Activated CD4-positive, alpha-beta T cell treated with anti-CD3 and anti-CD28 coated beads for 36 hours (primary cell): ENCODE measurements at regions of chr1 and their contacts with region 1.

Region 1: DNA sequence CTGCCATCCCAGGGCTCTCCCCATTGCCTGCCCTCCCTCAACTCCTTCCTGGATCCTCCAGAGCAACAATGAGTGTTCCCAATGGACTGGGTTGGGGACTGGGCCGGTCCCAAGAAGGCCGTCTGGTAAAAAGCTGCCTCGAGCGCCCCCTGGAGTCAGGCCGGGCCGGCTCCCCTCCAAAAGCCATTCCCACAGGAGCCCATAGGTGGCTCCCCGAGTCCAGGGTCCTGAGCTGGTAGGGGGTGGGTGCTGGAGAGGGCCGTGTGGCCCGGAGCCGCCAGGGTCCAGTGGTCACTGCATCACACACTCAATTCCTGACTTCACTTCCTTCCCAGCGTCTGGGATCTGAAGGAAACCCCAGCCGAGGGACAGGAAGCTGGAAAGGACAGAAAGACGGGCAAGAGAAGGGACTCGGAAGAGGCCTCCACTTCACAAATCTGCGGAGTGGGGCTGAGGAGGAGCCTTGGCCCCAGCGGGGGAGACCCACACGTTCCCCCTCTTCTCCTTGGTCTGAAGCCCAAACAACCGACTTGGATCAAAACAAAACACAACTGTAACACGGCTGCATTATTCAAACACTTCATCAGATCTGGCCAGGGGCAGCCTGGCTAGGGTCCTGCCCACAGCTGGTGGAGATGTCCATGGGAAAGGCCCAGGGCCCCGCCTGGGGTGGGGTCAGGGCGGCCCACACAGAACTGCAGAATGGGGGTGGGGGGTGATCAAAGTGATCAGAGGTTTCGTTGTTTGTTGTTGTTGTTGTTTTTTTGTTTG is 10.9 kb upstream of the ALDH4A1 start:
- DNase-seq: peak; percentile 87
- ATAC-seq: peak; percentile 86
- H3K4me3 Mint-ChIP-seq: no peak overlapping the region
- H3K27ac Mint-ChIP-seq: peak overlapping the region; percentile 70
- H3K4me1 Mint-ChIP-seq: peaks cover 28% of the 10 kb centered on the region
- H3K27me3 Mint-ChIP-seq: no peaks in the 10 kb centered on the region

Region 2: DNA sequence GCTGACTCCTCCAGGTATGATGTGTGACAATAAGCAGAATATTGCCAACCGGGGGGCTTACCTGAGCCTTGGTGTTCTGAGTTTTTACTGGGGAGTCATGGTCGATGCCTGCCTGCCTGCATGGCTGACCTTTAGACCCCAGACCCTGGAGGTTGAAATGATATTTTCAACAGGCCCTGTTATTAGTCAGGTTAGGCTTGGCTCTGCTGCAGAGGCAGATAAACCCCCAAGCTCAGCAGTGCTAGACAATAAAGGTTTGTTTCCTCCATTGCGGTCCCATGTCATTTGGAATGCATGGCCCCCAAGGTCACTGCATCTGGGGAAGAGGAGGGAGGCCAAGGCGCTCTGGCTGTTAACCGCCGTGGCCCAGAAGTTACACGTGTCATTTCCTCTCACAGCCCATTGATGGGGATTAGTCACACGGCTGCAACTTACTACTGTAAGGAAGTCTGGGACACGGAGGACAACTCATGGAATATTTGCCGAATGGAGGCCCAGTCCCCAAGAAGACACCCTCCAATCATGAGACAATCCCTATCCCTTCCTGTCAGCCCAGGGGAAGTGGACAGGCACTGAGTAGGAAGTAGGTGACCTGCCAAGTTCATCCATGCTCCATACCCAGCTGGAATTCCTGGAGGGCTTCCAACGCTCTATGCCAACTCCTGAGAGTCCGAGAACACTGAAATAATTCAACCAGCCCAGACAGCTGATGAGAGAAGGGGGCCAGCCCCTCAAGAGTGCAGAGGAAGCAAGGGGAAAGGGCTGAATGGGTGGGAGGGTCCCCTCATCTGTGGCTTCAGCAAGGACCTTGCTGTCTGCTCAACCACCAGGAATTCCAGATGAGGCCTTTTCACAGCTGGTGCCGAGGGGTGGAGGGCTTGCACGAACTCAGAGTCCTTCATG is 151.1 kb before region 1 on chr1:
- CTCF ChIA-PET with region 1: no interaction called
- POLR2A ChIA-PET with region 1: no interaction called
- intact Hi-C with region 1: no loop called
- DNase-seq: no peak
- ATAC-seq: no peak
- H3K4me3 Mint-ChIP-seq: no peak overlapping the region
- H3K27ac Mint-ChIP-seq: no peak overlapping the region
- H3K4me1 Mint-ChIP-seq: no peaks in the 10 kb centered on the region
- H3K27me3 Mint-ChIP-seq: peaks cover 21% of the 10 kb centered on the region

Region 3: GRCh38 chr1:18949686-18950400 is 36.6 kb after region 1 on chr1:
- CTCF ChIA-PET with region 1: interaction called, 28 read pairs
- POLR2A ChIA-PET with region 1: interaction called, 4 read pairs
- intact Hi-C with region 1: no loop called
- DNase-seq: peak; percentile 64
- ATAC-seq: no peak
- H3K4me3 Mint-ChIP-seq: peak overlapping the region; percentile 86
- H3K27ac Mint-ChIP-seq: peak overlapping the region; percentile 92
- H3K4me1 Mint-ChIP-seq: peaks cover 93% of the 10 kb centered on the region
- H3K27me3 Mint-ChIP-seq: no peaks in the 10 kb centered on the region

Region 4: GRCh38 chr1:18972531-18972930 is 59.3 kb after region 1 on chr1:
- CTCF ChIA-PET with region 1: interaction called, 11 read pairs
- POLR2A ChIA-PET with region 1: no interaction called
- intact Hi-C with region 1: no loop called
- DNase-seq: no peak
- ATAC-seq: peak; percentile 42
- H3K4me3 Mint-ChIP-seq: no peak overlapping the region
- H3K27ac Mint-ChIP-seq: no peak overlapping the region
- H3K4me1 Mint-ChIP-seq: peaks cover 8% of the 10 kb centered on the region
- H3K27me3 Mint-ChIP-seq: peaks cover 2% of the 10 kb centered on the region

Region 5: DNA sequence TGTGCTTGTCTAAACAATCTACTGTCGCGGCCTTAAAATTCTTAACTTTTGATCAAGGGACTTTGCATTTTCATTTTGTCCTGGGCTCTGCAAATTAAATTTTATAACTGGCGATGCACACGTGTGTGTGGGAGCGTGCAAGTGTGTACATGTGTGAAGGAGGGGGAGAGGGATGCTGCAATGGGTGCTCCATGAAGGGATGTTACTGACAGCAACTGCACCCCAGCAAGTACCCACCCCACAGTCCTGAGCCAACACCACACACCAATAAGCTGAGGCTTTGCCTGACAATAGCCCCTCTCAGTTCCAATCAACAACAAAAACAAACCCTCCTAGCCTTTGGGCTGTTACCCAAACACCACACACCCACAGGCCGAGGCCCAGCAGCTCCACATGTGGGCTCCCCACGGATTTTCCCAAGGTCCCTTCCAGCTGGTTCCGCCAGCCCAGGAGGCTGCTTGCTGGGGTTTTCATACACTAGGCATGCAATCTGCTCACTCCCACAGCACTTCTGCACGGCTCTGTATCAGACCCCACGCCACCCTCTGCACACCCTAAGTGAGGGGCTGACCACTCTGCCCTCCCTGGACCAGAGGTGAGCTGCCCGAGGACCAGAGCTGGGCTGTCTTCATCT is 76.0 kb after region 1 on chr1:
- CTCF ChIA-PET with region 1: interaction called, 10 read pairs
- POLR2A ChIA-PET with region 1: no interaction called
- intact Hi-C with region 1: no loop called
- DNase-seq: no peak
- ATAC-seq: no peak
- H3K4me3 Mint-ChIP-seq: no peak overlapping the region
- H3K27ac Mint-ChIP-seq: no peak overlapping the region
- H3K4me1 Mint-ChIP-seq: no peaks in the 10 kb centered on the region
- H3K27me3 Mint-ChIP-seq: peaks cover 8% of the 10 kb centered on the region